ENCODE measurements at regions of chr5 and their contacts with region 1.

Region 1: GRCh38 chr5:67246108-67246507 is 49.5 kb upstream of the CD180 start:
- DNase-seq: peak; percentile 32
- ATAC-seq: peak; percentile 39
- H3K4me3 Mint-ChIP-seq: no peak overlapping the region
- H3K27ac Mint-ChIP-seq: no peak overlapping the region
- H3K4me1 Mint-ChIP-seq: peaks cover 16% of the 10 kb centered on the region
- H3K27me3 Mint-ChIP-seq: no peaks in the 10 kb centered on the region

Region 2: GRCh38 chr5:66724349-66725139 is 521.6 kb before region 1 on chr5:
- CTCF ChIA-PET with region 1: no interaction called
- POLR2A ChIA-PET with region 1: no interaction called
- DNase-seq: no peak
- ATAC-seq: no peak
- H3K4me3 Mint-ChIP-seq: no peak overlapping the region
- H3K27ac Mint-ChIP-seq: no peak overlapping the region
- H3K4me1 Mint-ChIP-seq: no peaks in the 10 kb centered on the region
- H3K27me3 Mint-ChIP-seq: peaks cover 25% of the 10 kb centered on the region

Region 3: GRCh38 chr5:66796305-66797292 is 449.5 kb before region 1 on chr5:
- CTCF ChIA-PET with region 1: no interaction called
- POLR2A ChIA-PET with region 1: no interaction called
- DNase-seq: no peak
- ATAC-seq: no peak
- H3K4me3 Mint-ChIP-seq: no peak overlapping the region
- H3K27ac Mint-ChIP-seq: no peak overlapping the region
- H3K4me1 Mint-ChIP-seq: no peaks in the 10 kb centered on the region
- H3K27me3 Mint-ChIP-seq: peaks cover 37% of the 10 kb centered on the region

Region 4: GRCh38 chr5:67215583-67216471 is 30.3 kb before region 1 on chr5:
- CTCF ChIA-PET with region 1: interaction called, 17 read pairs
- POLR2A ChIA-PET with region 1: no interaction called
- DNase-seq: peak; percentile 85
- ATAC-seq: peak; percentile 99
- H3K4me3 Mint-ChIP-seq: peak overlapping the region; percentile 67
- H3K27ac Mint-ChIP-seq: peak overlapping the region; percentile 99
- H3K4me1 Mint-ChIP-seq: peaks cover 68% of the 10 kb centered on the region
- H3K27me3 Mint-ChIP-seq: no peaks in the 10 kb centered on the region

Region 5: DNA sequence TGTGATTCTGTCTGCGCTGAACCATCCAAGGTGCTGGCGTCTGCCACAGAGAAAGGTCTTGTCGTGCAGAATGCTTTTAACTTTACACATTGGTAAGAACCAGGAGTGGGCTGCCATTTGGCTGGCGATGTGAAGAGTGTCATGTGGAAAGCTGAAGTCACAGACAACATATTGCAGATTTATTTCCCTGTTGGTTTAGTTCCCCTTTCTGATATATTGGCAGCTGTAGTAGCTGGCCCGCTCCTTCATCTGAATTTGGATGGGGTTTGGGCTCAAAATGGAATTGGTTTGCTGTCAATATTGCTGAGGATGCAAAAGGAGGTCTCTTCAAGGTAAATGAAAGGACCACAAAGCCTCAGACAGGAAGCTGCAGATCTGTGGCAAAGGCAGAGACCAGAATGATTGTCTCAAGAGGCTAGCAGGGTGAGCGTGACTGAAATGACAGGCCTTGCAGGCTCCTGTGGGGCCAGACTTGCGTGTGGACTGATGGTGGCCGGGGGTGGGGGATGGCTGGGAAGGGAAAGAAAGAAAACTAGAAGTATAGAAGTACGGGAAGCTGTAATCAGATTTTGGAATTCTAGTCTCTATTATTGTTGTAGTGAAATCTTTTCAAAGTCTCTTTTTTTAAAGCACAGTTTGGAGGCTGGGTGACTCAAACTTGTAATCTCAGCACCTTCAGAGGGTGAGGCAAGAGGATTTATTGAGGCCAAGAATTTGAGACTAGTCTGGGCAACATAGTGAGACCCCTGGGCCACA is 24.4 kb before region 1 on chr5:
- CTCF ChIA-PET with region 1: interaction called, 17 read pairs
- POLR2A ChIA-PET with region 1: no interaction called
- DNase-seq: peak; percentile 83
- ATAC-seq: peak; percentile 92
- H3K4me3 Mint-ChIP-seq: peak overlapping the region; percentile 61
- H3K27ac Mint-ChIP-seq: peak overlapping the region; percentile 96
- H3K4me1 Mint-ChIP-seq: peaks cover 66% of the 10 kb centered on the region
- H3K27me3 Mint-ChIP-seq: no peaks in the 10 kb centered on the region

Region 6: DNA sequence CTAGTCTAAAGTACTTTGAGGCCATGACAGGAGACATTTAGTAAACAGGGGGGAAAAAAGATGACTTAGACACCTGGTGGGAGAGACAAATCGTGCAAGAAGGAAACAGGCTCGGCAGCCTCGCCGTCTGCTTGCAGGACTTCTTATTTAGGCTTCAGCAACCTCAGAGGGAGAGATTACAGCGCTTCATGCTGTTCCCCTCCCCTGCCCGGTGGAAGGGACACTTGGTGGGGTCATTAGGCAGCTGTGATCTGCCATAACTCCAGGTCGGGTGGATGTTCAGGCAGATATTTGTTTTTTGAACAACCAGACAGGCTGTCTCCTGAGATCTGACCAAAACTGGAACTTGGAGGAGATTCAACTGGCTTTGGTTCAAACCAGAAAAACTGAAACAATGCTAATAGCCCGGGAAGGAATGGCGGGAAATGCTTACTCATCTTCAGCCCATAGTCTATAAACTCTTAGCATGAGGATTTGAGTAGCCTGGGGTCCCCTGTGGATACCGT is 11.4 kb before region 1 on chr5:
- CTCF ChIA-PET with region 1: interaction called, 24 read pairs
- POLR2A ChIA-PET with region 1: interaction called, 4 read pairs
- DNase-seq: no peak
- ATAC-seq: no peak
- H3K4me3 Mint-ChIP-seq: no peak overlapping the region
- H3K27ac Mint-ChIP-seq: no peak overlapping the region
- H3K4me1 Mint-ChIP-seq: no peaks in the 10 kb centered on the region
- H3K27me3 Mint-ChIP-seq: peaks cover 2% of the 10 kb centered on the region

Region 7: DNA sequence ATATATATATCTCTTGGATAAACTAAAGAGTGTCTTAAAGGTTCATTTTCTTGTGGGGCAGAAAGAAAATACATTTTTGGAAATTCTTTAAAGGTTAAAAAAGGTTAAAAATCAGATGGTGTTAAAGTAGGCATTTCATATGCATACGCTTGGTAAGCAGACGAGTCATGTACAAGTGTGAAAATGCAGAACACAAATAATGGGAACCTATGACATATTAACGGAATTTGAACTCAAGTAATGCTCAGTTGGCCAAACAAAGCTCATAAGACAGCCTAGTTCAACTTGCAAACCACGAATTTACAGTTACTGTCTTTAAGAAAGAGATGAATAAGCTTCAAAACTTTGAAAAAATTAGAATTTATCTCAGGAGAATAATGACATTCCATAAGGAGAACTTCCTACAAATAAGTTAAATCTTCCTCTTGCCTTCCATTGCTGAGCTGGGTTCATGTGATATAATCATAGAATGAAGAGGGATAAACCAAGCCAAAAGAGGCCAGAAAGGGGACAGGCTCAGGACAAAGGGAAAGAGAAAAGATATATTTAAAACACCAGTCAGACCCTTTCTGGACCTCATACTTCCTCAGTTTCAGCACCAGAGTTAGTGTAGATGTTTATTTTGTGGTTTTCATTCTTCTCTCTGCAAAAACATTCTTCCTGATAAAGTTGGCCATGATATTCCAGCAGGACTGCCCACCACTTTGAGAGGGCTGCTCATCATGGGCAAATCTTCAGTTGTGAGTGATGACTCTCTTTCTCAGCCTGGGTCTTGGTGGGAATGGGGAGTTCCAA is 207.2 kb after region 1 on chr5:
- CTCF ChIA-PET with region 1: no interaction called
- POLR2A ChIA-PET with region 1: no interaction called
- DNase-seq: no peak
- ATAC-seq: no peak
- H3K4me3 Mint-ChIP-seq: no peak overlapping the region
- H3K27ac Mint-ChIP-seq: no peak overlapping the region
- H3K4me1 Mint-ChIP-seq: no peaks in the 10 kb centered on the region
- H3K27me3 Mint-ChIP-seq: no peaks in the 10 kb centered on the region

Region 8: DNA sequence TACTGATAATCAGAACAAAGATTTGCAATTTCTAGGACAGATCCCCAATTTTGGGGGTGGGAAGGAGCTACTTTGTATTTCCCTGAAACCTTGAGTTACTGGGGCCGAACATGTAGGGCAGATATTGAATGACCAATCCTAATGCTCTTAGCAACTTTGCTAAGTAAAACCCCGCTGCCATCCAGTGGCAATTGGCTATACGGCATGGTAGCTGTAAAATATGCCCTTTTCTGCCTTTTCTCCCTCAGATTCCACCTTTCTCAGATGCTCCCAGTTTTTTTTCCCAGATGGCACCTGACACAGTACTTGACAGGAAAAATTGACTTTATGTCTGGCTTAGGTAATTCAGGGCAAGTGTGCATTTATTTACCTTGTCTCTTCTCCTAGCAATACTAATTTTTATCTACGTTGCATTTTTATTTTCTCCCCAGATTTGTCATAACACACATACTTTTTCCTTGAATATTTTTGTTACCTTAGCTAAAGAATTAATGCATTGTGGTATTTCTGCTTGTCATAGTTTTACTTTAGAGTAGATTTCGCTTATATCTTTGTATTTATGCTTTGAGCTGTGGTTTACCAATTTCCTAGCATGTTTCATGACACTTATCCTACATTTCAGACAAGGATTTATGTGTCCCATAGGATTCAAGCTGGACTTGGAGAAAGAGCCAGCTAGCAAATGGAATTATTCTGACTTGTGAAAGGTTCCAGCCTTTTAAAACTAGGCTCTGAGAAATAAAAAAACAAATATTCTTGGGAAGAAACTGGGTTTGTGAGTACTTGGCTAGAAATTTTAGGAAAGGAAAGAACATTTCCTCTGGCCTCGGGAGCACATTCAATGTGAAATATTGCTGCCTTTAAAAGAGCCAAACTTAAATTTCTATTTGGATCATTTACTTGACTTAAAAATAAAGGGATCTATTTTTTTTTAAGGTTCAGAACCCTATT is 1006.8 kb after region 1 on chr5:
- CTCF ChIA-PET with region 1: interaction called, 23 read pairs
- POLR2A ChIA-PET with region 1: no interaction called
- DNase-seq: peak; percentile 54
- ATAC-seq: peak; percentile 40
- H3K4me3 Mint-ChIP-seq: no peak overlapping the region
- H3K27ac Mint-ChIP-seq: no peak overlapping the region
- H3K4me1 Mint-ChIP-seq: peaks cover 76% of the 10 kb centered on the region
- H3K27me3 Mint-ChIP-seq: no peaks in the 10 kb centered on the region

Region 9: DNA sequence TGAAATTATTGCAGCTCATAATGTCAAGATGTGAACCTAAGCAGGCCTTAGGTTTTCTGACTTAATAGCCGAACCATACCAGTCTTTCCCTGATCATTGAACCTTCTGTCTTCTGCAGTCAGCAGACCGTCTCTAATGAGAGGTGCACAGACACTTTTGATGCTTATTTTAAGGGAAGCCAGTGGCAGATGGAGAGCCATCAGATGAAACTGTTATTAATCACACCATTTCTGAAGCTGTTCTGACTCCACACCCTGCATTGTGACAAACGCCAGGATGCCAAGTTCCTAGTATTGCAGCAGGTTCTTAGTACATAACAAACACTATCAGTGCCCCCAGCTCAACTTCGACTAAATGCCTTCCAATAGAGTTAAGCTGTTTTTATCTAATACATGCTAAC is 1012.4 kb after region 1 on chr5:
- CTCF ChIA-PET with region 1: interaction called, 23 read pairs
- POLR2A ChIA-PET with region 1: no interaction called
- DNase-seq: no peak
- ATAC-seq: no peak
- H3K4me3 Mint-ChIP-seq: no peak overlapping the region
- H3K27ac Mint-ChIP-seq: no peak overlapping the region
- H3K4me1 Mint-ChIP-seq: peaks cover 59% of the 10 kb centered on the region
- H3K27me3 Mint-ChIP-seq: no peaks in the 10 kb centered on the region

Region 10: DNA sequence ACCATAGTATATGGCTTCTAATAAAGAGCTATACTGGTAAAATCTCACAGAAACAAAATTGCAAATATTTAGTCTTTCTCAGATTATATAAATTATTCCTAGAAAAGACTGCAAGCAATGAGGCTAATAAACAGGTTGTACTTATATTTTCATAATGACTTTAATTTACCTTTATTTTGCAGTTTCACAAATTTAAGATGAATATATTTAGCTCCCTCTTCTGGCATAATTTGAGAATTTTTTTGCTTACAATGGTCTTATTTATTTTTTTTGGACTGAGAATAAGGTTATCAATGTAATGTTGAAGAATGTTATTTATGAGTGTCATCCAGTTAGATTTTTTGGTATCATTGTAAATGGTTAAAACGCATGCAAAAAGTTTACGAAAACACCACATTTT is 1026.2 kb after region 1 on chr5:
- CTCF ChIA-PET with region 1: interaction called, 14 read pairs
- POLR2A ChIA-PET with region 1: no interaction called
- DNase-seq: no peak
- ATAC-seq: no peak
- H3K4me3 Mint-ChIP-seq: no peak overlapping the region
- H3K27ac Mint-ChIP-seq: no peak overlapping the region
- H3K4me1 Mint-ChIP-seq: peaks cover 66% of the 10 kb centered on the region
- H3K27me3 Mint-ChIP-seq: no peaks in the 10 kb centered on the region

Measured in activated CD8-positive, alpha-beta T cell treated with anti-CD3 and anti-CD28 coated beads, Interleukin-2, amount 10 ng/mL, durations not matched to agents 7 days and 5 days (primary cell).